ENCODE measurements at regions of chr12 and their contacts with region 1.

Region 1: GRCh38 chr12:5988659-5989116 is 43.6 kb upstream of the ANO2 start:
- DNase-seq: peak; percentile 80
- H3K4me3 ChIP-seq: no peak overlapping the region
- H3K27ac ChIP-seq: no peak overlapping the region
- H3K4me1 ChIP-seq: no peaks in the 10 kb centered on the region
- H3K27me3 ChIP-seq: no peaks in the 10 kb centered on the region
- CTCF ChIP-seq: peak; percentile 61 to 76 (median 75)
- POLR2A ChIP-seq: no peak

Region 2: DNA sequence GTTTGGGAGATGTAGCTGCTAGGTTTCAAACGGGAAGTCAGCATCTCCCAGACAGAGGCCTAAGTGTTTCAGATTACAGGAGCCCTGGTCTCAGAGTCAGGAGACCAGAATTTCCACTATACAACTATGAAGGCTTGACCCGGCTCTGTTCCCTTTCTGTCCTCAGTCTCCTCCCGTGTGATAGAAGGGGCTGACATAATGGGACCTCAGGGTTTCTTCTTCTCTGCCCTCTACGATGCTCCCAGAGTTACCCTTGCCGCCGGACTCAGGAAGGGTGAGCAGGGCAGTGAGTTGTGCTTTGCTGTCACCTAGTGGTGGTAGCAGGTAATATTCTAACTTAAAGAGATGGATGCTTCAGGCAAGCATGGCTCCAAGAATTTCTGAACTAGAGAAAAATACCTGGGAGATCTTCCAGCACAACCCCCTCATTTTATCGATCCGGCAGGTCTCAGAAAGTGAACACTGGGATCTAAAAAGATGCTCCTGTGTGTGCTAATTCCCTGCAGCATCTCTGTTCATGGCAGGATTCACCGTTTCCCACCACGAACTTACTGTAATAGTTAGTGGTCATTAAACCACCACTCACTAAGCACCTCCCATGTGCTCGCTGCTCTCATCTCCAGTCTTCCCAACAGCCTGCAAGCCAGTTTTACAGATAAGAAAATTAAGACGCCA is 51.3 kb after region 1 on chr12:
- intact Hi-C with region 1: loop called (anchors 10 kb)
- DNase-seq: peak; percentile 72
- H3K4me3 ChIP-seq: no peak overlapping the region
- H3K27ac ChIP-seq: no peak overlapping the region
- H3K4me1 ChIP-seq: no peaks in the 10 kb centered on the region
- H3K27me3 ChIP-seq: no peaks in the 10 kb centered on the region
- CTCF ChIP-seq: peak; percentile 74 to 96 (median 91)
- POLR2A ChIP-seq: no peak

Region 3: DNA sequence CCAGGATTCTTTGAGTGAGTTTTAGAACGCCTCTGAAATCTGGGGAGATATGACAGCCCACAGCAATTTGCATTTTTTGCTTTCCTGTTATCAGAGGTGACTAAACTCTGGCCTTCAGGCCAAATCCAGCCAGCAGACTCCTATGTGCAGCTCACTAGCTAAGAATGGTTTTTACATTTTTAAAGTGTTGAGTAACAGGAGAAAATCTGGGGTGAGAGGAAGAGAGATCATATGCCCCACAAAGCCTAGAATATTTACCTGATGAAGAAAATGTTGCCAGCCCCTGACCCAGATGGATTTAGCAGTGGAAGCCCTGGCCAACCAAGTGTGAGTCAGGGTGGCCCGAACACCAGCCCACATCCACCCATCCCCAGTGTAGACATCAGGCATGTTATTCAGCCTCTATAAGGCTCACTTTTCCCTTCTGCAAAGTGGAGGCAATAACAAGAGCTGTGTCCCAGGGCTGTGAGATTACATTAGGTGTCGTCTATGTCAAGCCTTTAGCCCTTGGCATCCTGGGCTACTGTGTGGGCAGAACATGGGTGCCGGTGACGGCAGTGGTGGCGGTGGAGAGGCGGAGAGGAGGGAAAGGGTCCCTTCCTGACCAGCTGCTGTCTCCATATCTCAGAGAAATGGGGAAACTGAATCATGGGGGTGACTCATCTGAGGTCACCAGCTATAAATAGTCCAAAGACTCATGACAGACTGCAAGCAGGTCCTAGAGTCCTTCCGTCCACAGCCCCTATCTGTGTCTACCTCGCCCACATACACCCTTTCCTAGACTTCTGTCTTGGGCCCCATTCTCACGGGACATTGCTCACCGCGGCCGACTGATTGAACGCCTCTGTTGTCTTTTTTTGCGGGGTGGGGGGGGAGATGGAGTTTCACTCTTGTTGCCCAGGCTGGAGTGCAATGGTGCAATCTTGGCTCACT is 178.9 kb after region 1 on chr12:
- intact Hi-C with region 1: no loop called
- DNase-seq: no peak
- H3K4me3 ChIP-seq: no peak overlapping the region
- H3K27ac ChIP-seq: peak overlapping the region in 1 of 2 donors; percentile 65
- H3K4me1 ChIP-seq: no peaks in the 10 kb centered on the region
- H3K27me3 ChIP-seq: no peaks in the 10 kb centered on the region
- CTCF ChIP-seq: no peak
- POLR2A ChIP-seq: no peak